Psoas muscle (tissue), 8 donors: ENCODE measurements at regions of chr1 and their contacts with region 1.

Region 1: GRCh38 chr1:226009650-226010044 is 10.5 kb upstream of the SDE2 start:
- DNase-seq: no peak
- ATAC-seq: no peak
- H3K4me3 ChIP-seq: no peak overlapping the region
- H3K27ac ChIP-seq: no peak overlapping the region
- H3K4me1 ChIP-seq: no peaks in the 10 kb centered on the region
- H3K27me3 ChIP-seq: no peaks in the 10 kb centered on the region
- CTCF ChIP-seq: no peak

Region 2: GRCh38 chr1:226051356-226051755 is 41.7 kb after region 1 on chr1:
- intact Hi-C with region 1: loop called in 1 of 2 experiments (anchors 5 kb)
- DNase-seq: no peak
- ATAC-seq: no peak
- H3K4me3 ChIP-seq: no peak overlapping the region
- H3K27ac ChIP-seq: no peak overlapping the region
- H3K4me1 ChIP-seq: no peaks in the 10 kb centered on the region
- H3K27me3 ChIP-seq: no peaks in the 10 kb centered on the region
- CTCF ChIP-seq: no peak

Region 3: DNA sequence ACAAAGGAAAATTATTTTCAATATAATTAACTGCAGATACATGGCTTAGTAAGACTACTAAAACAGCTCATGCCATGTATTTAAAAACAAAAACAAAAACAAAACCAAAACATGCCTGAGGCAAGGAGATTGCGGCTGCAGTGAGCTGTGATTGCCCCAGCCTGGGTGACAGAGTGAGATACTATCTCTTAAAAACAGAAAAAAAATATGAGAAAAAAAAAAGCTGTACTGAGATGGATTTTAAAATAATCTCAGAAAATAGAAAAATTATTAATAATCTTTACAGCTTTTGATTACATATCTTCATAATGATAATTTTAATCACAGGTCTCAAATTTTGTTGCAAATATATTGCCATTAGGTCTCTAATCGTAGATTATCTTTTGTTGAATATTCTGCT is 323.3 kb after region 1 on chr1:
- intact Hi-C with region 1: no loop called
- DNase-seq: no peak
- ATAC-seq: no peak
- H3K4me3 ChIP-seq: no peak overlapping the region
- H3K27ac ChIP-seq: no peak overlapping the region
- H3K4me1 ChIP-seq: no peaks in the 10 kb centered on the region
- H3K27me3 ChIP-seq: no peaks in the 10 kb centered on the region
- CTCF ChIP-seq: no peak